ENCODE measurements at regions of chr6 and their contacts with region 1.

Region 1: DNA sequence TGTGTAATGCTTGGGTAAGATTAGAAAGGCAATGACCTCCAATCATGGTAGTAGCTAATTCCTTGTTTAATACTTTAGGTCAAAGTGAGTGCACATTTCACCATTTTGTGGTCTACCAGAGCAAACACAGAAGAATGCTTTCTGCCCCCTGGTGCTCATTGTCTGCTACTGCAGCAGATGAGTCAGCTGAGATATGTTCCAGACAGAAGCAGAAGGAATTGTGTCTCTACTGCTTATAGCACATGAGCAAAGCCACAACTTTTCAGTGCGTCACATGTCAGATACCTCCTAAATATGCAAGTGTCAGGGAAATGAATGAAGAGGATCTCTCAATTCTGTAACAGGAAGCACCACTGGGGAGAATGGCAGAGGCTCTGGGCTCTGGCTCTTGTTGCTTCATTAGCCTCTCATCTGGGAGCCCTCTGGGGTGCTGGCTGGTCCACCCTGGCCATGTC is 308.9 kb downstream of the ALDH8A1 start:
- DNase-seq: peak; percentile 59 to 84 (median 64)
- ATAC-seq: peak; percentile 95
- H3K4me3 ChIP-seq: no peak overlapping the region
- H3K27ac ChIP-seq: no peak overlapping the region
- H3K4me1 ChIP-seq: 0 out of 5 replicates have a peak, but pooled peaks cover 0 to 2% of the 10 kb centered on the region in 2 experiments
- H3K27me3 ChIP-seq: no peaks in the 10 kb centered on the region
- CTCF ChIP-seq: peak; percentile 76 to 89 (median 88)
- EP300 ChIP-seq: no peak
- POLR2A ChIP-seq: no peak
- RAD21 ChIP-seq: peak; percentile 97 to 98

Region 2: DNA sequence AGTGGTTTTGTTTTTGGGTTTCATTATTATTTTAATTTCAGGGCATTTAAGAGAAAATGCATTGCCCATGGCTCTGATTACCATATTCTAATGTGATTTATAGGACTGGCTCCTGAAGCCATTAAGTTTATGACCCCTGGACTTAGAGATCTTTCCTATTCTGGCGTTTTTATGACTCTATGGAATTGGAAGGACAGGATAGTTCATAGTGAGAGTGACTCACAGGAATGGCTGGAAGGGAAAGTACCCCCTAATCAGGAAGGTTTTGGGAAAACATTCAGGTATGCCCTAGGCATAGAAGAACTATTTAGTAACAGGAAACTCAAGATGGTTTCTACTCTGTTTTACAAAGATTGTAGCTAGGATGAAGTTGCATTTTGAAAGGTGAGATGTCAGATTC is 480.0 kb before region 1 on chr6:
- CTCF ChIA-PET with region 1: interaction called, 4 read pairs
- POLR2A ChIA-PET with region 1: no interaction called
- in situ Hi-C with region 1: loop called (anchors 5 kb)
- intact Hi-C with region 1: loop called (anchors 5 kb)
- DNase-seq: no peak
- ATAC-seq: no peak; the same call in 2 of the 3 replicates
- H3K4me3 ChIP-seq: no peak overlapping the region
- H3K27ac ChIP-seq: no peak overlapping the region
- H3K4me1 ChIP-seq: no peaks in the 10 kb centered on the region
- H3K27me3 ChIP-seq: no peaks in the 10 kb centered on the region
- CTCF ChIP-seq: no peak
- EP300 ChIP-seq: no peak
- POLR2A ChIP-seq: no peak
- RAD21 ChIP-seq: no peak

Region 3: DNA sequence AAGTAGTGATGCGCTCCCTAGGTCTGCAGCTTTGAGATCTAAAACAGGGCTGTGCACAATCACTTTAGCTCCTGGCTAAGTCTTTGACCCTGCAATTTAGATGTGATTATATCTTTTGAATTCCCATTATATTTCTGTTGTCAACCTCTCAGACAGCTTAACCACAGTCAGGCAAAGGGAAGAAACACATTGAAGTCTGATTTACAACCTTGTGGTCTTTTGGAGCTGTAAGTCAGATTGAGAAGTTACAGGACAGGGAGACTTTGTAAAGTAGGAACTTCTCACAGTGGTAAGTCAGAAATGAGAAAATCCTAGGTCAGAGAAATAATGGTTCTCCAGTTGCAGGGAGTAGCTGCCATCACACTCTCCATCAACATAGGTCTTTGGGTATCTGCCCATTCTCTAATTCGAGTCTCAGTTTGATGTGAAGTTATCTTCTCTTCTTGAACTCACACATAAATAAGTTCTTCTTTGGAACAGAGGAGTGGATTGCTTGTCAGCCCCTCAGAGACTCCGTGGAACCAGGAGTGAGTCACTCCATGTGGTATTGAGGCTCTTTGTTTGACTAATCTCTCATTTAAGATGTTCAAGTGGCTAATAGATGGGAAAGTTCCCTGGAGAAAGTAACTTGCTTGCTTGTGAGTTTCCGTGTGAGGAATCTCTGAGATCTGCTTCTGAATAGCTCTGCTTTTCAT is 288.1 kb before region 1 on chr6:
- CTCF ChIA-PET with region 1: no interaction called
- POLR2A ChIA-PET with region 1: no interaction called
- in situ Hi-C with region 1: no loop called
- intact Hi-C with region 1: loop called (anchors 10 kb)
- DNase-seq: no peak
- ATAC-seq: no peak
- H3K4me3 ChIP-seq: no peak overlapping the region
- H3K27ac ChIP-seq: no peak overlapping the region
- H3K4me1 ChIP-seq: no peaks in the 10 kb centered on the region; a peak in 1 of 5 replicates
- H3K27me3 ChIP-seq: no peaks in the 10 kb centered on the region
- CTCF ChIP-seq: no peak
- EP300 ChIP-seq: no peak
- POLR2A ChIP-seq: no peak
- RAD21 ChIP-seq: no peak

Region 4: DNA sequence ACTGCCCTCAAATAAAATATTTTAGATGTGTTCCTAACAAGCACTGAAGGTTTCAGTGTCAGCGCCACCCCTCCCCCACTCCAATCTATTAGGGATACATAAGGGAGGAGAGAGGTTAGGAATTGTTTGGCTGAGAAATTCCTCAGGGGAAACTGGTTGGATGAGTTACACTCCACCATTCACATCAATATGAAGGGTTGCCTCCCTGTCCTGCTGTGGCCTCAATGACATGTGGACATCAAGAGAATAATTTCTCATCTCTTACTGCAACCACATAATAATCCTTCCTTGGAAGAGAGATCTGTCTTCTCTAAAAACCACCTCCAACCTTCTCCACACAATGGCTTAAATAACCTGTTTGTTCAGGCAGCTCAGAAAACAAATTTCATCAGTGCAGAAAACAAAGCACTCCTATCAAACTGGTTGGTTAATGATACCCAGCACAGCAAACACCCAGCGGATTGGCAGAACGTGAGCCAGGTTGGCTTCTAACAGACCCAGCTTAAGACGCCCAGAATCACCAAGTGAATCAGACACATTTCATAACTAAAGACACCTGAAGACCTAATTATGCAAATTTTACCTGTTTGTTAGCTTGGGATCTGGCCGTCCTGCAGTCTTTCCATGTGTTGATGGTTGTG is 187.0 kb before region 1 on chr6:
- CTCF ChIA-PET with region 1: no interaction called
- POLR2A ChIA-PET with region 1: no interaction called
- in situ Hi-C with region 1: no loop called
- intact Hi-C with region 1: loop called (anchors 5 kb)
- DNase-seq: no peak
- ATAC-seq: no peak
- H3K4me3 ChIP-seq: no peak overlapping the region
- H3K27ac ChIP-seq: no peak overlapping the region
- H3K4me1 ChIP-seq: no peaks in the 10 kb centered on the region; a peak in 1 of 5 replicates
- H3K27me3 ChIP-seq: no peaks in the 10 kb centered on the region
- CTCF ChIP-seq: no peak
- EP300 ChIP-seq: no peak
- POLR2A ChIP-seq: no peak
- RAD21 ChIP-seq: no peak

Region 5: DNA sequence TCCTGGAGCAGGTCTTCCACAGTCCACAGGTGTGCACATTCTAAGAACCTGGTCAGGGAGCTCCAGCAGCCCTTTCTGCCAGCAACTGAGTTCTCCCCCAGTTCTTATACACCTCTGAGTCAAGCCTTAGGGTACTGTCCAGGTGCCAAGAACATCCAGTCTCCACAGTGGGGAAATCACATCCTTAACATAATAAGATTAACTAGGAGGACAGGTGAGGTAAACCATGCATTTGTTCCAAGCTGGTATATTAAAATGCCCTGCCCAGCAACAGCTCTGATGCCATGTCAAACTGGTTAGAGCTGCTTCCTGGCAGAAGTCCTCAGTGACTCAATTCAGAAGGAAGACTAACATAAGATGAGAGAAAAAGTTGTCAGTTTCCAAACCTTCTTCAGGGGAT is 19.1 kb before region 1 on chr6:
- CTCF ChIA-PET with region 1: no interaction called
- POLR2A ChIA-PET with region 1: no interaction called
- in situ Hi-C with region 1: no loop called
- intact Hi-C with region 1: no loop called
- DNase-seq: no peak
- ATAC-seq: no peak
- H3K4me3 ChIP-seq: no peak overlapping the region
- H3K27ac ChIP-seq: no peak overlapping the region
- H3K4me1 ChIP-seq: no peaks in the 10 kb centered on the region
- H3K27me3 ChIP-seq: peaks cover 8% of the 10 kb centered on the region in 2 experiments
- CTCF ChIP-seq: no peak
- EP300 ChIP-seq: no peak
- POLR2A ChIP-seq: no peak
- RAD21 ChIP-seq: no peak

Measured in K562 (cell line).